ENCODE measurements at regions of chr4 and their contacts with region 1.

Region 1: GRCh38 chr4:188822698-188823097 is 683.5 kb downstream of the TRIML1 start:
- DNase-seq: no peak
- ATAC-seq: peak in 1 of 4 donors; percentile 41
- H3K4me3 ChIP-seq: no peak overlapping the region
- H3K27ac ChIP-seq: no peak overlapping the region
- H3K4me1 ChIP-seq: no peaks in the 10 kb centered on the region
- H3K27me3 ChIP-seq: no peaks in the 10 kb centered on the region
- CTCF ChIP-seq: no peak
- POLR2A ChIP-seq: no peak

Region 2: DNA sequence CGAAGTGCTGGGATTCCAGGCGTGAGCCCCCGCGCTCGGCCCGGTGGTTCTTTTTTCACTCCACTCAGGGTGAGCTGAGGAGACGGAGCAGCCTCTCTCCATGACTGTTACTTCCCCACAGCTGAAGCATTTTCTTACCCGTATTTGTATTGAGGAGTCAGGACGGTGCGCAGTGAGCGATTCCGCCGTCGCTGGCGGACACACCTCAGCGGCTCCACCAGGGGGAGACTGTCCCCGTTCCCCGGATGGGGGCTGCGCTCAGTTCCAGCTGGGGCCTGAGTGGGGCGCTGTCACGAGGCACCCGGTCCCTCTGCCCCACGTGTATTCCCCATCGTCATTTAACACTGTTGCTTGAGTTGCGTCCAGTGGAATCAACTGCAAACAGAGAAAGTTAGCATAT is 274.0 kb after region 1 on chr4:
- intact Hi-C with region 1: no loop called
- DNase-seq: no peak
- ATAC-seq: no peak
- H3K4me3 ChIP-seq: no peak overlapping the region
- H3K27ac ChIP-seq: no peak overlapping the region
- H3K4me1 ChIP-seq: no peaks in the 10 kb centered on the region
- H3K27me3 ChIP-seq: no peaks in the 10 kb centered on the region
- CTCF ChIP-seq: no peak
- POLR2A ChIP-seq: no peak

Region 3: GRCh38 chr4:189304750-189305149 is 482.1 kb after region 1 on chr4:
- intact Hi-C with region 1: loop called in 1 of 2 experiments (anchors 5 kb)
- DNase-seq: no peak
- ATAC-seq: peak in 2 of 4 donors; percentile 45 to 53
- H3K4me3 ChIP-seq: no peak overlapping the region
- H3K27ac ChIP-seq: no peak overlapping the region
- H3K4me1 ChIP-seq: no peaks in the 10 kb centered on the region
- H3K27me3 ChIP-seq: no peaks in the 10 kb centered on the region
- CTCF ChIP-seq: no peak
- POLR2A ChIP-seq: no peak

Measured in right lobe of liver (tissue), 6 donors.